MCF 10A (cell line): ENCODE measurements at regions of chr5 and their contacts with region 1.

Region 1: DNA sequence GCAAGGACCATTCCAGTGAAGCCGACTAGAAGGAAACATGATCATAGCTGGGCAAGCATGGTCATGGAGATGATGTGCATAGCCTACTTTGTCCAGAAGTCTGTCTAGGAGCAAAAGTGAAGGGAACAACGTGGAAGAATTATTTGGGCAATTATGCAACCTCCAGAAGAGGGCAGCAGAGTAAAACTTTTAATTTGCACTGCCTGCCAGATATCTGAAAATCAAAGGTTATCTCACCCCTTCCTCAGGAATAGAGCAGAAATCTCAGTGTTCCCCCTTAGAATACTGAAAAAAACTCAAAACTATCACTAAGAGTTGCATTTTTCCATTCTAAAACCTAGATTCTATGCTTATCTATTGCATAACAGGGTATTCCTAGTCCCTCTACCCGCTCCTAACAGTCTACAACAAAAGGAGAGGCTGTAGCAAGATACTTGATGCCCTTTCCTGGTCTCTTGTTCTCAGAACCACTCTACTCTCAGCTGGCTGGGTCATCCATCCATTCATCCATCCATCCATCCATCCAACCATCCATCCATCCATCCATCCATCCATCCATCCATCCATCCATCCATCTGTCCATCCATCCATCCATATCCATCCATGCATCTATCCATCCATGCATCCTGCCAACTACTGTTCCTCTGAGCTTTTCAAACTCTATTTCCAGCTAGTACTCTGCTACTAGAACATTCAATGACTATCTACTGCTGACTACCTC is 8.4 kb upstream of the SETD9 start:
- DNase-seq: peak; percentile 63
- H3K4me3 Mint-ChIP-seq: no peak overlapping the region
- H3K27ac Mint-ChIP-seq: no peak overlapping the region
- H3K4me1 Mint-ChIP-seq: no peaks in the 10 kb centered on the region
- H3K27me3 Mint-ChIP-seq: no peaks in the 10 kb centered on the region
- CTCF ChIP-seq: peak; percentile 78

Region 2: GRCh38 chr5:57277085-57277484 is 376.1 kb after region 1 on chr5:
- CTCF ChIA-PET with region 1: interaction called, 4 read pairs
- POLR2A ChIA-PET with region 1: no interaction called
- intact Hi-C with region 1: loop called (anchors 1 kb)
- DNase-seq: peak; percentile 35
- H3K4me3 Mint-ChIP-seq: no peak overlapping the region
- H3K27ac Mint-ChIP-seq: no peak overlapping the region
- H3K4me1 Mint-ChIP-seq: no peaks in the 10 kb centered on the region
- H3K27me3 Mint-ChIP-seq: no peaks in the 10 kb centered on the region
- CTCF ChIP-seq: peak; percentile 26

Region 3: GRCh38 chr5:58042995-58043945 is 1142.3 kb after region 1 on chr5:
- CTCF ChIA-PET with region 1: no interaction called
- POLR2A ChIA-PET with region 1: no interaction called
- intact Hi-C with region 1: no loop called
- DNase-seq: no peak
- H3K4me3 Mint-ChIP-seq: no peak overlapping the region
- H3K27ac Mint-ChIP-seq: peak overlapping the region; percentile 37
- H3K4me1 Mint-ChIP-seq: peaks cover 16% of the 10 kb centered on the region
- H3K27me3 Mint-ChIP-seq: no peaks in the 10 kb centered on the region
- CTCF ChIP-seq: no peak